BJ (cell line): ENCODE measurements at regions of chr9 and their contacts with region 1.

Region 1: DNA sequence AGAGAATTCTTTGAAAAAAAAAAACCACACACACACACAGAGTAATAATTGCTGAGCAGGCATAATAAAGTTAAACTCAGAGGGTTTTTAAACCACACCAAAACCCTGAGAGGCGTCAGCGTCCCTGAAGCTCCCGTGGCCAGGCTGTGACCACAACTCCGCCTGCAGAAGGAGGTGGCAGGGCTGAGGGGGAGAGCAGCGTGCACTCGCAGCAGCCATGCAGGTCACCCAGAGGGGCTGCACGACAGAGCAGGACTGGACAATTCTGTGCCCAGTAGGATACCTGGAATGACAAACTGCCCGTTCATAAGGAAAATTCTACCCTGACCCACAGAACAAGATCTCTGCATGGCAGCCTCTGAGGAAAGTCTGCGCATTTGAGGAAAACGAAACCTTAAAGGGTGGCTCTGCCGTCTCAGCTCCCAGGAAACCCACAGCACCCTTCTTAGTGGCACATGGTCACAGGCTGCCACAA is 44.0 kb downstream of the ROR2 start:
- DNase-seq: no peak
- H3K4me3 ChIP-seq: no peak overlapping the region
- H3K27me3 ChIP-seq: no peaks in the 10 kb centered on the region
- CTCF ChIP-seq: no peak

Region 2: GRCh38 chr9:91820949-91821880 is 84.8 kb before region 1 on chr9:
- CTCF ChIA-PET with region 1: no interaction called
- POLR2A ChIA-PET with region 1: interaction called, 10 read pairs
- DNase-seq: no peak
- H3K4me3 ChIP-seq: no peak overlapping the region
- H3K27me3 ChIP-seq: peaks cover 4% of the 10 kb centered on the region; the same call in 1 of the 2 replicates
- CTCF ChIP-seq: no peak

Region 3: DNA sequence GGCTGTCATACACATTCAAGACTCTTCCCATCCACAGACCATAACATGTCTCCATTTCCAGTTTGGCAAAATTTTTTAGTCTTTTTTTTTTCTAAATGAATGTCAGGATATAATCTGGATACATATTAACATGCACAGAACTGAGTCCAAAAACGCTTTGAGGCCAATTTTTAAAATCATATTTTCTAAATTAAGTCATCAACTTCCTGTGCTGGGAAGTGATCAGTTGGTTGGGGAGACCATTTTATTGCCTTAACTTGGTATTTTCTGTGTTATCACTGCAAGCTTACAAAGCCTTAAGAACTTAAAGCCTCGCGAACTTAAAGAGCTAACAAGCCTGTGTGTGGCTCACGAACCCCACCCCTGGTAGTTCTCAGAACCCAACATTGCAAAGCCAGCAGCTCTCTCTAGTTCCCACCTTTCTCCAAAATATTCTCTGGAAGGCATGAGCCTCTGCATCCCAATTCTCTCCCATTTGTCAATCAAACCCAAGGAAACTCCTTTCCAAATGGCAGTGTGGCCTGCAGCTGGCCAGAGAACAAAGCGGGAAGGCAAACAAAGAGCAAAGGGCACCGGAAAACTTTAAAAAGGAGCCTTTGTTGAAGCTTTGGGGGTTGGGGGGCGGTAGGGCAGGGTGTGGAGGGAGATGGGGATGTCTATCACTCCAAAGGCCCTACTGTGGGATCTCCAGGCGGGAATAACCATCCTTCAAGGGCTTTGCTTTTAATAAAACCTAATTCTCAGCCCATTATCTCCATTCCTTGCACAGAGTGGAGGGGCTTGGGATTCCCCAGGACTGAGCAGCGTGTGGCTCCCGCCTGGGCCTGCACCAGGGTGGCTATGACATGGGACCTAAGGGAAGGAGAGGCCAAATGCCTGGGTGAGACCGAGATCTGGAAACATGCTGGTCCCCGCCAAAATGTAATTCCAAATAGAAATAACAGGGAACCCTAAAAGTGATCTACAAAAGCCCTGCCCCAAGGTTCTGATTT is 21.0 kb before region 1 on chr9:
- CTCF ChIA-PET with region 1: no interaction called
- POLR2A ChIA-PET with region 1: no interaction called
- DNase-seq: no peak
- H3K4me3 ChIP-seq: no peak overlapping the region
- H3K27me3 ChIP-seq: peaks cover under 1% of the 10 kb centered on the region
- CTCF ChIP-seq: no peak